ENCODE measurements at regions of chr15 and their contacts with region 1.

Region 1: DNA sequence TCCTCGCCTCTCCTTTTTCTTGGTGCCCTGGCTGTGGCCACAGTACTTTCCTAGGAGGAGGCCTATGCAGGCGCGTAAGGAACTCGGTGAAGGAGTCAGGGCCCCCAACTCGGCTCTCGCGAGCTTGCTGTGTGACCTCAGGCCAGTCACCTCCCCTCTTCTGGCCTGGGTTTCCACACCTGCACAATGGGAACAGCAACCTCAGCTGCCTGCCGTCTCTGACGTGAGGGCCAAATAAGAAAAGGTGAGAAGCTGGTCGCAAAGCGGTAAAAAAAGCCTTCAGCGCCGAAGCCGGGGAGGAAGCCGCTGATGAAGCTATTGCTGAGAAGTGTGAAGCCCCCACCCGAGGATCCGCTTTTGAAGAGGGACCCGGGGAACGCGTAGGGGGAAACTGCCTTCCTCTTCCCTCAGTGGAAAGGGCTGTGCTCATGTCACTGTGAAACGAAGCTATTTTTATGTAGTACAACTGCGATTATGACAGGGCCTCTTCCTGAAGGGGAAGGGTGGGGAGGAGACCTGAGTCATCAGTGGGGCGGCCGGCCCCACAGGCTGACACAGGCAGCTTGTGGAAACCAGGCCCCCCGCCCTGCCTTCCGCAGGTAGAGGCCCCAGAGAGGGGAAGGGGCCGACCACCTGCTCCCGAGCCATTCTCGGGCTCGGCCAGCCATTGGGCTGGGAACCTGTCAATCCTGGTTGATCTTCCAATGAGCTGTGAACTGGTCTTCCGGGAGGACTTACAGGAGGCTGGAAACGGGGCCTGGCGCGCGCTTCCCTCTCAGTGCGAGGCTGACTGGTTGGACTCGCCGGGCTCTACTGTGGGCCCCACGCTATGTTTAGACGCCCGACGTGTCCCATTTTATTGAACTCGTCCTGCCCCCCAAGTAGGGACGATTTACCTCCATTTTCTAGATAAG is 18.0 kb upstream of the ANKDD1A start:
- DNase-seq: peak; percentile 97 to 99
- H3K4me3 ChIP-seq: peak overlapping the region; percentile 60
- H3K4me3 Mint-ChIP-seq: peak overlapping the region; percentile 96
- H3K27ac Mint-ChIP-seq: peak overlapping the region; percentile 90
- H3K4me1 ChIP-seq: peaks cover 18% of the 10 kb centered on the region
- H3K4me1 Mint-ChIP-seq: peaks cover 7% of the 10 kb centered on the region
- H3K27me3 ChIP-seq: no peaks in the 10 kb centered on the region; the same call in 1 of the 2 replicates
- H3K27me3 Mint-ChIP-seq: no peaks in the 10 kb centered on the region
- CTCF ChIP-seq: no peak

Region 2: GRCh38 chr15:64841258-64842095 is 52.3 kb before region 1 on chr15 and contains the start of gene PLEKHO2:
- CTCF ChIA-PET with region 1: interaction called, 6 read pairs
- POLR2A ChIA-PET with region 1: interaction called, 10 read pairs
- intact Hi-C with region 1: loop called (anchors 5 kb)
- DNase-seq: peak; percentile 93 to 96
- H3K4me3 ChIP-seq: peak within 1 kb of the TSS; percentile 65
- H3K4me3 Mint-ChIP-seq: peak within 1 kb of the TSS; percentile 88
- H3K27ac Mint-ChIP-seq: peak within 1 kb of the TSS; percentile 66
- H3K4me1 ChIP-seq: peaks cover 5% of the 10 kb centered on the region; the same call in 1 of the 2 replicates
- H3K4me1 Mint-ChIP-seq: peaks cover 23% of the 10 kb centered on the region
- H3K27me3 ChIP-seq: no peaks in the 10 kb centered on the region
- H3K27me3 Mint-ChIP-seq: peaks cover 2% of the 10 kb centered on the region
- CTCF ChIP-seq: no peak
- total RNA-seq, gene PLEKHO2: 4.5 and 4.9 TPM in 2 replicates